GM12878 (cell line): ENCODE measurements at regions of chr21 and their contacts with region 1.

Region 1: DNA sequence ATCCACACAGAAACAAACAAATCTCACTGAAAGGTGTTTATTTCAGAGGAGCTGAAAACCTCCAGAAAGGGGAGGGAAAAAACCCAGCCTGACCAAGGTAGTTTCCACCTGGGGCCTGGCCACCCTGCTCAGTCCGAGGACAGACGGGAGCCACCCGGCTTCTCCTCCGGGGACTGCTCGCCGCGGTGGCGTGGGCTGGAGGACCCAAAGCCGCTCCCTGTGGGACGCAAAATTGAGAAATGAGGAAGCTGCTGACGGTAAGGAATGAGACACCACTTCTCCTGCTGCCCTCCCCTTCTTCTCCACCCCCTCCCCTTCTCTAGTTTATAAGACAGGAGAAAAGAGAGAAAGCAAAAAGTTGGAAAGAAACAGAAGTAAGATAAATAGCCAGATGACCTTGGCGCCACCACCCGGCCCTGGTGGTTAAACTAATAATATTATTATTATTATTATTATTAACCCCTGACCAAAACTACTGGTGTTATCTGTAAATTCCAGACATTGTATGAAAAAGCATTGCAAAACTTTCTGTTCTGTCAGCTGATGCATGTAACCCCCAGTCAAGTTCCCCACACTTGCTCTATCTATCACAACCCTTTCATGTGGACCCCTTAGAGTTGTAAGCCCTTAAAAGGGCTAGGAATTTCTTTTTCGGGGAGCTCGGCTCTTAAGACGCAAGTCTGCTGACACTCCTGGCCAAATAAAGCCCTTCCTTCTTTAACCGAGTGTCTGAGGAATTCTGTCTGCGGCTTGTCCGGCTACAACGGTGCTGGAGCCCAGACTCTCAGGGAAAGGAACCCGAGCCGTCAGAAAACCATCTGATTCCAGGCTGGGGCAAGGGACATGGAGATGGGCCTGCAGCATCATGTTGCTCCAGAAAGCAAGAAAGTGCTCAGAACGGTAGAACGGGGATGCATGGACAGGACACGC is 12.5 kb downstream of the ITGB2 start:
- DNase-seq: no peak
- ATAC-seq: peak; percentile 86
- H3K4me3 ChIP-seq: no peak overlapping the region
- H3K27ac ChIP-seq: peak overlapping the region; percentile 38; the same call in 1 of the 2 replicates
- H3K4me1 ChIP-seq: peaks cover 22% of the 10 kb centered on the region
- H3K27me3 ChIP-seq: no peaks in the 10 kb centered on the region
- CTCF ChIP-seq: no peak
- EP300 ChIP-seq: no peak
- POLR2A ChIP-seq: no peak
- RAD21 ChIP-seq: no peak

Region 2: DNA sequence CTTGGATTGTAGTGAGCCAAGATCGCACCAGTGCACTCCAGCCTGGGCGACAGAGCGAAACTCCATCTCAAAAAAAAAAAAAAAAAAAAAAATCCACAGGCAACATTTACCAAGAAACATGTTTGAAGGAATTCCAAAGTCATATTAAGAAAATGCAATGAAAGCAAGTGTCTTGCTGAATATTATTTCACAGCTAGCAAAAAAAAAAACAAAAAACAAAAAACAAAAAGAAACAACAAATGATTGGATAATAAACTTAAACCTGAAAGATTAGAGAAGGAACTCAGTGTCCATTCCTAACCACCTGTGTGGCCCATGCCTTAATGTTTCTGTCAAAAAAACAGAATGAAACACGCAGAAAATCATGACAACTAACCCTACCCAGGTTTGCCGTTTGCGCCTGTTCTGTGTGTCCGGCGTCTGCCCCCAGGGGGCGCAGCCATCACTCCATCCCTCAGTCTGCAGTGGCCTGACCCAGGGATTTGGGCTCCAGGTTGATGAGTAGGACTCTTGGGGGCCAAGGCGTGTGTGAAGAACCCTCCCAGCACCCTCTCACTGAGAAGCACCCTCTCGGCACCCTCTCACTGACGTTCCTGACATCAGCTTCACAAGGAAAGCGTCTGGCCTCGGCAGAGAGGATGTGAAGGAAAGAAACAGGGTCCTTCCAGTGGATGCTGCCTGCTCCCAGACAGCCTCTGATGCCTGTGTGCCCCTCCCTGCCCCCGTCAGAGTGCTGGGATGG is 15.5 kb before region 1 on chr21:
- CTCF ChIA-PET with region 1: interaction called, 13 read pairs
- POLR2A ChIA-PET with region 1: interaction called, 3 read pairs
- RAD21 ChIA-PET with region 1: interaction called, 4 read pairs
- SMC1A ChIA-PET with region 1: interaction called, 3 read pairs
- in situ Hi-C with region 1: no loop called
- intact Hi-C with region 1: no loop called
- DNase-seq: no peak
- ATAC-seq: peak; percentile 96
- H3K4me3 ChIP-seq: no peak overlapping the region
- H3K27ac ChIP-seq: no peak overlapping the region
- H3K4me1 ChIP-seq: no peaks in the 10 kb centered on the region
- H3K27me3 ChIP-seq: no peaks in the 10 kb centered on the region
- CTCF ChIP-seq: peak; percentile 94 to 97 (median 96)
- EP300 ChIP-seq: no peak
- POLR2A ChIP-seq: no peak
- RAD21 ChIP-seq: peak; percentile 76